Activated T-helper 1 cell treated with anti-CD3 and anti-CD28 coated beads, Interleukin-12 subunit alpha, Interleukin-12 subunit beta, Interleukin-2, Interleukin-4 antibody, amounts not matched to agents 30 ng/mL and 10 ng/mL and 1 ng/mL, durations not matched to agents 14 hours and 24 hours and 36 hours (primary cell): ENCODE measurements at regions of chr10 and their contacts with region 1.

Region 1: DNA sequence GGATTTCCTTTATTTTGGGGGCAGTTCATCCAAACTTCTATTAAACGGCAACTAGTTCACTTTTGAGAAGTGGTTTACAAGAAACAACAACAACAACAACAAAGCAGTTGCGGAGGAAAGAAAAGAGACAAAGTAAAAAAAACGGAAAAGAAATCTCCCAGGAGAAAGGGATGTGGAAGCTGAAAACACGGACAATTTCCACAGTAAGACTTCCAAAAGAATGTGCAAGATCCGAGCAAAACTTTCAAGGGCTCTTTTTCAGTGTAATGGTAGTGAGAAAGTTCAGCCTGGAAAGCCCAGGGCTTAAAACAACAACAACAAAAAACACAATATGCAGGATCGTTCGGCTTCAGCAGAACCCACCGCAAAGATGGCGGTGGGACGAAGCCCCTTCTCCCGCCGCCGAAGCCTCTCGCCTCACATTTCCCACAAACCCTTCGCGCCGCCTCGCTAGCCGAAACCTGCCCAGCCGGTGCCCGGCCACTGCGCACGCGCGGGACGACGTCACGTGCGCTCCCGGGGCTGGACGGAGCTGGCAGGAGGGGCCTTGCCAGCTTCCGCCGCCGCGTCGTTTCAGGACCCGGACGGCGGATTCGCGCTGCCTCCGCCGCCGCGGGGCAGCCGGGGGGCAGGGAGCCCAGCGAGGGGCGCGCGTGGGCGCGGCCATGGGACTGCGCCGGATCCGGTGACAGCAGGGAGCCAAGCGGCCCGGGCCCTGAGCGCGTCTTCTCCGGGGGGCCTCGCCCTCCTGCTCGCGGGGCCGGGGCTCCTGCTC is at the start of gene TNKS2:
- DNase-seq: peak; percentile 93
- H3K4me3 Mint-ChIP-seq: peak within 1 kb of the TSS; percentile 97
- H3K27ac Mint-ChIP-seq: peak within 1 kb of the TSS; percentile 98
- H3K4me1 Mint-ChIP-seq: peaks cover 62% of the 10 kb centered on the region
- H3K27me3 Mint-ChIP-seq: no peaks in the 10 kb centered on the region
- total RNA-seq, gene TNKS2: 29.9 and 30.6 TPM in 2 replicates

Region 2: DNA sequence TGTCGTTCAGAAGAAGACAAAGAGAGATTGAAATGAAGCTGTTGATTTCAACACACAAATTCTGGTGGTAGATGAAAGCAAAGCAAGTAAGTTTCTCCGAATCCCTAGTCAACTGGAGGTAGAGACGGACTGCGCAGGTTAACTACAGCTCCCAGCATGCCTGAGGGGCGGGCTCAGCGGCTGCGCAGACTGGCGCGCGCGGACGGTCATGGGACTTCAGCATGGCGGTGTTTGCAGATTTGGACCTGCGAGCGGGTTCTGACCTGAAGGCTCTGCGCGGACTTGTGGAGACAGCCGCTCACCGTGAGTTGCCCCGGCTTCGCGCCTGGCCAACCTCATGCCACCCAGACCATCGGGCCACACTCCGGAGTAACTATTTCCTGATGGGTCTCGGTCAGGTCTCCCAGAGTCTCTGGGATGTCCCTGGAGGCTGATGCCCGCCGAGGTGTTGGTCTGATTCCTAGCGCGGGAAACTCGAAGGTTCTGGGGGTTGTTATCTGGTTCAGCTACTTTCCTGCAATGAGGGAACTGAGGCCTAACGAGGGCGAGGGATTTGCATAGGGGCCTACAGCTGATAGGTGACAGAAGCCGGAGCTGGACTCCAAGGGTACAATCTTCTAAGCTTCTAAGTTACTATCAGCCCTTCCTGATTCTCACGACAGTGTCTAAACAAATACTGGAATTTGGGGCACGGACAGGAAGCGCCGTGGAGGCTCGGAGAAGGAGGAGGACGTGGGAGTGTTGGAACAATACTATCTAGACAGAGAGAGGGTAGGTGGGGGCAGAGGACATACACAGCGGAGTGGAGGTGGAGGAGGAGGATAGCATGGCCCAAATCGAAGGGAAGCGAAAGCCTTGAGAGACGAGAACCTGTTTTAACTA is 926.1 kb before region 1 on chr10 and contains the start of gene RPP30:
- intact Hi-C with region 1: loop called (anchors 10 kb)
- DNase-seq: peak; percentile 82
- H3K4me3 Mint-ChIP-seq: peak within 1 kb of the TSS; percentile 97
- H3K27ac Mint-ChIP-seq: peak within 1 kb of the TSS; percentile 91
- H3K4me1 Mint-ChIP-seq: peaks cover 39% of the 10 kb centered on the region
- H3K27me3 Mint-ChIP-seq: peaks cover 29% of the 10 kb centered on the region
- total RNA-seq, gene RPP30: 78.3 and 80.4 TPM in 2 replicates

Region 3: DNA sequence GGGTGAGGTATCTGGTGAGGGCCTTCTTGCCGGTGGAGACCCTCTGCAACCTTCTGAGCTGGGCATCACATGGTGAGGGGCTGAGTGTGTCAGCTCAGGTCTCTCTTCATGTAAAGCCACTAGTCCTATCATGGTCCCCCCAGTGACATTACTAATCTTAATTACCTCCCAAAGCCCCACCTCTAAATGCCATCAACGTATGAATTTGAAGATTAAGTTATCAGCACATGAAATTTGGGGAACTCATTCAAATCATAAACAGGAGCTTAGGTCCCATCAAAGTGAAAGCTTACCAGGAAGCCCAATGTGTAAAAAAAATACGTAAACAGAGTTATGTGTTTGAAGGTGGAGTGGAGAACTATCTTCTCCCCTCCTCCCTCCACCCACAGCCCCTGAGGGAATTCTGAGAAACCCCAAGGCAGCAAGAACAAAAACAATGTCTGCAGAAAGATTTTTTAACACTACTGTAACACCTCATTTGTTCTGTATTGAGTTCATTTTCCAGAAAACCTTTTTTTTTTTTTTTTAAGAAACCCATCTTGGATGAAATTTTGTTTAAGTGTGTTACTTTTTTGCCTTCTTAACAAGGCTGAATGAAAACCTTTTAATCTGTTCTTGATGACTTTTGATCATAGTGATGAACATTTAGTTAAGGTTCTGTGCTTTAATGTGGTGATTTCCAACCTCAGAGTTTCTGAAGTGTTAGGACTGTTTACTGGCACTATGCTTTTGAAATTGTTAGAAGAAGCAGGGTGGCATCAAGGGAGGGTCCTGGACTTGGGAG is 596.7 kb before region 1 on chr10:
- intact Hi-C with region 1: loop called (anchors 2 kb)
- DNase-seq: peak; percentile 47
- H3K4me3 Mint-ChIP-seq: peak overlapping the region; percentile 68
- H3K27ac Mint-ChIP-seq: peak overlapping the region; percentile 92
- H3K4me1 Mint-ChIP-seq: peaks cover 81% of the 10 kb centered on the region
- H3K27me3 Mint-ChIP-seq: no peaks in the 10 kb centered on the region

Region 4: DNA sequence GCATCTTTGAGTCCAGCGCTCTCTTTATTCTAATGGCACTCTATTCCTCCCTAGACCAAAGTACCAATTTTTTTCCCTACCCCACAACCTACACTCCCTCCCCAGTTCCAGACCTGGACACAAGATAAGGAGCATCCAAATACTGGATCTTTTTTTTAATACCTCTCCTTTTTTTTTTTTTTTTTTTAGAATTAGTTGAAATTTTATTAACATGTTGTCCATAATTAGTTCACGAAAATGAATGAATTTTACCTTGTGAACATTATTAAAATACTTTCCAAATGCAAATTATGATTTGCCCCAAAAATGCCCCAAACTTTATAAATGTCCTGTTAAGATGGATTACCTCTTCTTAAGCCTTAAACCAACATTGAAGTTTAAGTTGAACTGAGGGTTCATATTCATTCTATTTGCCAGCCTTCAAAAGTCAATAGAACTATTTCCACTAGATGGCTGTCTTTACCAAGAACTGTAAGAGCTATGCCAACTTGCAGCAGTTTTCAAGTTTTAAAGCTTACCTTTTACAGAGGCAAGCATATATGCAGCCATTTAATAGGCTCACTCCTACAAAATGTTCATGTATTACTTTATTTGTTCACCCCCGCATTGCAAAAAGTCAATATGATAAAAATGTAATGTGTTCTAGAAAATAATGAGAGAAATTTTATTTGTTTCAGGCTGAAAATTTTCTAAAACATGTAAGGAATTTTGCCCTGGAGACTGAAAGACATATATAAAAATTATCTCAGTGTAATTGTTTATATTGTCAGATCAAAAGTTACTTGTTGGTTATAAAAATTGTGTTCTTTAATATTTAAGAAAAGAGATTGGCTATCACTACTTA is 39.5 kb before region 1 on chr10:
- intact Hi-C with region 1: loop called (anchors 1 kb)
- DNase-seq: no peak
- H3K4me3 Mint-ChIP-seq: no peak overlapping the region
- H3K27ac Mint-ChIP-seq: no peak overlapping the region
- H3K4me1 Mint-ChIP-seq: no peaks in the 10 kb centered on the region
- H3K27me3 Mint-ChIP-seq: peaks cover 37% of the 10 kb centered on the region

Region 5: GRCh38 chr10:91923371-91924211 is 125.5 kb after region 1 on chr10 and contains the start of gene BTAF1:
- intact Hi-C with region 1: loop called (anchors 2 kb)
- DNase-seq: peak; percentile 89
- H3K4me3 Mint-ChIP-seq: peak within 1 kb of the TSS; percentile 98
- H3K27ac Mint-ChIP-seq: peak within 1 kb of the TSS; percentile 99
- H3K4me1 Mint-ChIP-seq: peaks cover 36% of the 10 kb centered on the region
- H3K27me3 Mint-ChIP-seq: peaks cover 9% of the 10 kb centered on the region
- total RNA-seq, gene BTAF1: 58.8 and 59.2 TPM in 2 replicates

Region 6: DNA sequence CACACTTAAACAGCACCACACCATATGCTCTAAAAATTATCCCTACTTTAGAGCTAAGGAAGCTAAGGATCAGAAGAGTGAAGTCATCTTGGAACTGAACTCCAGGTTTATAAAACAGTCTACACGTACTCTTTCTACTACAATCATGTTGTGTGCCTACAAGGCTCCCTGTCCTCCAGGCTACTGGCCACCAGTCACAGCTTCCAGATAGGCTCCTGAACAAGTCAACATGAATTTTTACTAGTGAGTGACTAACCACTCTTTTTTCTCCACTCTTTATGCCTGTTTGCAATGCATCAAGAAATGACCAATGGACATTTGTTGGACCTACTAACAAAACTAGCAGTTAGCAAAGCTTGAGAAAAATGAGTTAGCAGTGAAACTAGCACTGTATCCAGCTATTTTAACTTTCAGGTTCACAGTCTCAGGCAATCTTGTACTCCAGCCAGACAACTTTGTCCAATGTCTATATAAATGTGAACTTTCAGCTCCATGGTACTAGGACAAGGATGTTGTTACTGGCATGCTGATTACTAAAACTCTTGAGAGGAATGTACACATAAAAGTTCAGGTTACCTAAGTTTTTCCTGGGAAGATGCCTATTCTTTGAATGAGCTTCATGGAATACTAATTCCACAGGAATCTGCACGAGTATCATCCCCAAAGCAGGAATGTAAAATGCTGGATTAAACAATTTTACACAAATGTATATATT is 305.5 kb after region 1 on chr10:
- intact Hi-C with region 1: loop called (anchors 2 kb)
- DNase-seq: no peak
- H3K4me3 Mint-ChIP-seq: no peak overlapping the region
- H3K27ac Mint-ChIP-seq: no peak overlapping the region
- H3K4me1 Mint-ChIP-seq: peaks cover 22% of the 10 kb centered on the region
- H3K27me3 Mint-ChIP-seq: no peaks in the 10 kb centered on the region

Region 7: GRCh38 chr10:92284112-92284704 is 486.1 kb after region 1 on chr10:
- intact Hi-C with region 1: no loop called
- DNase-seq: no peak
- H3K4me3 Mint-ChIP-seq: peak overlapping the region; percentile 31
- H3K27ac Mint-ChIP-seq: peak overlapping the region; percentile 77
- H3K4me1 Mint-ChIP-seq: peaks cover 19% of the 10 kb centered on the region
- H3K27me3 Mint-ChIP-seq: no peaks in the 10 kb centered on the region

Region 8: GRCh38 chr10:92404612-92405418 is 606.8 kb after region 1 on chr10:
- intact Hi-C with region 1: no loop called
- DNase-seq: no peak
- H3K4me3 Mint-ChIP-seq: no peak overlapping the region
- H3K27ac Mint-ChIP-seq: no peak overlapping the region
- H3K4me1 Mint-ChIP-seq: no peaks in the 10 kb centered on the region
- H3K27me3 Mint-ChIP-seq: peaks cover 17% of the 10 kb centered on the region

Region 9: GRCh38 chr10:92592761-92593618 is 794.9 kb after region 1 on chr10 and contains the start of gene KIF11:
- intact Hi-C with region 1: loop called (anchors 5 kb)
- DNase-seq: peak; percentile 95
- H3K4me3 Mint-ChIP-seq: peak within 1 kb of the TSS; percentile 96
- H3K27ac Mint-ChIP-seq: peak within 1 kb of the TSS; percentile 97
- H3K4me1 Mint-ChIP-seq: peaks cover 58% of the 10 kb centered on the region
- H3K27me3 Mint-ChIP-seq: no peaks in the 10 kb centered on the region
- total RNA-seq, gene KIF11: 37.3 and 38.7 TPM in 2 replicates